RWPE1 (cell line): ENCODE measurements at regions of chr15 and their contacts with region 1.

Region 1: GRCh38 chr15:63504247-63504978 is at the start of gene USP3:
- DNase-seq: peak; percentile 88
- H3K27ac ChIP-seq: peak within 1 kb of the TSS; percentile 98
- CTCF ChIP-seq: peak; percentile 28

Region 2: GRCh38 chr15:63466378-63467192 is 37.8 kb before region 1 on chr15:
- CTCF ChIA-PET with region 1: interaction called, 16 read pairs
- POLR2A ChIA-PET with region 1: no interaction called
- DNase-seq: peak; percentile 83
- H3K27ac ChIP-seq: no peak overlapping the region
- CTCF ChIP-seq: peak; percentile 85

Region 3: DNA sequence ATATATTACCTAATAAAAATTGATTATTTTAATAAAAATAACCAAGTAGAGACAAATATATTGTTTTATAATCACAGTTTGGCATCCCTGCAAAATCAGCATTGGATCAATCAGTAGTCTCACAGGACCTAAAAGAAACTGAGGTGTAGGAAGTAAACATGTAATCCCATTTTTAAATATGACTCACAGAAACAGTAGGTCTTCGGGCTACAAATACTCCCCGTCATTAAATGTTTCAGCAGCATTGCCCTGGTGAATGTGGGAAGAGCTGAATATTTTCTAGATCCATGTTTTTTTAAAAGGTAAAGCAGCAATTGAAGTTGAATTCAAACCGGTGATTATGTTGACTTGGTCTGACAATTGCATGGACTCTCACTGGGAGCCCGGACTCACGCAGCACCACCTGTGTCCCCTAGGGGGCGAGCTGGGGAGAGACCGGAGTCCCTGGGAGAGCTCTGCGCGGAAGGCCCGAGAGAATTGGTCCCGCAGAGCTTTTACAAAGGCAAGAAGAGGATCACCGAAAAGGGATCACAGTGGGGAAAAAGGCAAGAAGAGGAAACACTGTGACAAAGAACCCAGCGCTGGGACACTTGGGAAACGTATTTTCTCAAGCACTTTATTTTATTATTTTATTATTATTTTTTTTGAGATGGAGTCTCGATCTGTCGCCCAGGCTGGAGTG is 17.2 kb before region 1 on chr15:
- CTCF ChIA-PET with region 1: interaction called, 11 read pairs
- POLR2A ChIA-PET with region 1: interaction called, 4 read pairs
- DNase-seq: peak; percentile 67
- H3K27ac ChIP-seq: no peak overlapping the region
- CTCF ChIP-seq: peak; percentile 90

Region 4: DNA sequence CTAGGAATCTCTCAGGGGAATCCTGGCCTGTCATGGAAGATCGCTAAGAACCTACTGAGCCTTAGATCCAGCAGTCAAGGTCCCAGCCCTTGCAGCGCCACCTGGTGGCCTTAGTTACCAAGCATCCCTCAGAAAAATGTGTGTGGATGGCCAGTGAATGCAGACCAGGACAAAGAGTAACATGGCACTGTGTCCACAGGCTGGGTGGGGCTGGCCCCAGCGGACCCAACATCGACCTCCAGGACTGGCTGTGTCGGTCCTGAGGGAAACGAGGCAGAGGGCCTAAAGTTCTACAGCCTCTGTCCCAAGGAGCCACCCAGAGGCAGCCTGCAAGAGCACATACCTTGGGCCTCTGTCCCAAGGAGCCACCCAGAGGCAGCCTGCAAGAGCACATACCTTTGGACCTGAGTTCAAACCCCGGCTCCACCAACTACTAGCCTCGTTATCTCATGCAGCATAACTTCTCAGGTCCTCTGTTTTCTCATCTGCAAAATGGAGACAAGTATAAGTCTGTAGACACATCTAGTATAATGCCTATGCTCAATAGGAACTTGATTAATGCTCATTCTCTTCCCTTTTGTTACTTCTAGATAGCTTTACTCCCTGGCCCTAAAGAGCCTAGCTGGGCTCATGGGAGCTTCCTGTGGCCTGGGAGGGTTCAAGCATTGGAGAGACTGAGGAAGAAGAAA is 386.8 kb after region 1 on chr15:
- CTCF ChIA-PET with region 1: no interaction called
- POLR2A ChIA-PET with region 1: no interaction called
- DNase-seq: peak; percentile 68
- H3K27ac ChIP-seq: no peak overlapping the region
- CTCF ChIP-seq: peak; percentile 87